Left cardiac atrium (tissue), 4 donors: ENCODE measurements at regions of chr20 and their contacts with region 1.

Region 1: GRCh38 chr20:23361598-23362384 is at the start of gene GZF1:
- DNase-seq: peak; percentile 98
- ATAC-seq: peak; percentile 93 to 94
- total RNA-seq, gene GZF1: 12.9 to 18.7 TPM

Region 2: GRCh38 chr20:23637282-23638221 is 275.8 kb after region 1 on chr20 and contains the start of gene CST3:
- intact Hi-C with region 1: loop called in 1 of 2 experiments (anchors 10 kb)
- DNase-seq: peak; percentile 94
- ATAC-seq: peak; percentile 85 to 91
- total RNA-seq, gene CST3: 940 to 1,205 TPM